Activated B cell treated with CpG ODN at 0.5 μM for 24 hours (primary cell): ENCODE measurements at regions of chr9 and their contacts with region 1.

Region 1: DNA sequence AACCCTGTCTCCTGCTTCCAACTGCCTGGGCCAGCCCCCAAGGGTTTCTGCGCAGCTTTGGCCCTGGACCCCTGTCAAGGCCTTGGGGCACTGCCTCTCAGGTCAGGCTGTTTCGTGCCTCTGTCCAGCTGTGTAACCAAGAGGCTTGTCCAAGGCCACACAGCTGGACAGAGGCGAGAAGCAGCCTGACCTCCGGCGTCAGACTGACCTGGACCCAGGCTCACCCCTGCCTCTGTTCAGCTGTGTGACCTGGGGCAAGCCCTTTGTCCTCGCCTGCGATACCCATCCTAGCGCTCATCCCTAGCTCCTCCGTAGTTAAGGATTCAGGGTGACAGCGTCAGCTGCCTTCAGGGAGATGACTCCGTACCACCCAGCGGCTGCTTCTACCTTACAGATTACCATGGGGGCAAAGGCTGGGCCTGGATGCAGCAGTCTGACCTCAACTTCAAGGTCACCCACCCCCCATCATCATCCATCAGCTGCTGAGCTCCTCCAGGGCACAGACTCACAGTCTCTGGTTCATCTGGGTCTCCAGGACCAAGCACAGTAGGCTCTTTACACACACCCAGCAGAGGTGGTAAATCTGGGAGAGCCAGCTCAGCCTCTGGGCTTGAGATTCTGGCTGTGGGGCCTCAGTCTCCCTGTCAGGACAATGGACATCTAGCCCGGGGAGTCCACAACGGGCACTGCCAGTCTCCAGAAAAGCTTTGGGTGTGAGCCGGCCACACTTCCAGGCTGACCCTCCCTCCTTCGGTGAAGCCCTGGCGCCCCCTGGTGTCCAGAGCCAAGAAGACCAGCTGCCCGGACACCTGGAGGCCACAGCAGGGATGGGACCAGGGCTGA is 7.9 kb downstream of the AK1 start:
- DNase-seq: peak; percentile 81
- ATAC-seq: peak; percentile 79
- H3K4me3 Mint-ChIP-seq: no peak overlapping the region
- H3K27ac Mint-ChIP-seq: no peak overlapping the region
- H3K4me1 Mint-ChIP-seq: peaks cover 22% of the 10 kb centered on the region
- H3K27me3 Mint-ChIP-seq: no peaks in the 10 kb centered on the region
- CTCF ChIP-seq: no peak

Region 2: DNA sequence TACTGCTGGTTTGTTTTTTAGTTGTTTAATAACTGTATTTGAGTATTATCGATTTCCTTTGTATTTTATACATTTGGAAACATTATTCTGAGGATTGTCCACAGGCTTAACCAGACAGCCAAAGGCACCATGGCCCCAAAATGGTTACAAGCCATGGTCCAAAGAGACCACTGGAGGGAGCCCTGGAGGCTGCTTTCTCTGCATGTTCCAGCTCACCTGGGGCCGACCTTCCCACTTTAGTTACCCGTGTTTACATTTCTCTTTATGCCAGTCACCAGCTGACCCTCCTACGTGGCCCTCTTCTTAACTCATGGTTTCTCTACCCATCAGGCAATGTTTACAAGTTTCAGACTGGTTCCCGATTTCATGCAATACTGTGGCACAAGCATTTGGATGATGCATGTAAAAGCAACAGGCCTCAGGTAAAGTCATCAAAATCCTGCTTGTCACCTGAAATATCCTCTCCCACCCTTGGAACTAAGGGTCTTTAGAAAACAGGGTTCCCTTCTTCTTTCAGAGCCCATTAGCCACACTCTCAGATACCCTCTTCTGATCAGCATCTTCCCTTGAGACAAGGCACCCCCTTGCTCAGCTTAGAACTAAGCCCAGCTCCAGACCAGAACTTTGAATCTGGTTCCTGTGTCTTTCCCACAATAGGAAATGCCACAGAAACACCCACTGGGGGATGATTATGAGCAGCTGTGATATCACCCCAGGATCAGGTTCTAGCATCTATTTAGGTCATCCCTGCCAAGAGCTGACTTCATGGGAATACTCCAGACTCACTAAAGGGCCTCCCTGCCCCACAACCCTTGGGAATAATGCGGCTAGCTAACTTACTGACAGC is 654.9 kb before region 1 on chr9:
- CTCF ChIA-PET with region 1: interaction called, 5 read pairs
- POLR2A ChIA-PET with region 1: no interaction called
- intact Hi-C with region 1: loop called (anchors 2 kb)
- DNase-seq: no peak
- ATAC-seq: peak; percentile 86
- H3K4me3 Mint-ChIP-seq: no peak overlapping the region
- H3K27ac Mint-ChIP-seq: no peak overlapping the region
- H3K4me1 Mint-ChIP-seq: peaks cover 4% of the 10 kb centered on the region
- H3K27me3 Mint-ChIP-seq: no peaks in the 10 kb centered on the region
- CTCF ChIP-seq: peak; percentile 17

Region 3: GRCh38 chr9:127586537-127586936 is 283.0 kb before region 1 on chr9:
- CTCF ChIA-PET with region 1: interaction called, 25 read pairs
- POLR2A ChIA-PET with region 1: no interaction called
- intact Hi-C with region 1: loop called (anchors 1 kb)
- DNase-seq: no peak
- ATAC-seq: peak; percentile 64
- H3K4me3 Mint-ChIP-seq: no peak overlapping the region
- H3K27ac Mint-ChIP-seq: no peak overlapping the region
- H3K4me1 Mint-ChIP-seq: no peaks in the 10 kb centered on the region
- H3K27me3 Mint-ChIP-seq: peaks cover 24% of the 10 kb centered on the region
- CTCF ChIP-seq: no peak

Region 4: DNA sequence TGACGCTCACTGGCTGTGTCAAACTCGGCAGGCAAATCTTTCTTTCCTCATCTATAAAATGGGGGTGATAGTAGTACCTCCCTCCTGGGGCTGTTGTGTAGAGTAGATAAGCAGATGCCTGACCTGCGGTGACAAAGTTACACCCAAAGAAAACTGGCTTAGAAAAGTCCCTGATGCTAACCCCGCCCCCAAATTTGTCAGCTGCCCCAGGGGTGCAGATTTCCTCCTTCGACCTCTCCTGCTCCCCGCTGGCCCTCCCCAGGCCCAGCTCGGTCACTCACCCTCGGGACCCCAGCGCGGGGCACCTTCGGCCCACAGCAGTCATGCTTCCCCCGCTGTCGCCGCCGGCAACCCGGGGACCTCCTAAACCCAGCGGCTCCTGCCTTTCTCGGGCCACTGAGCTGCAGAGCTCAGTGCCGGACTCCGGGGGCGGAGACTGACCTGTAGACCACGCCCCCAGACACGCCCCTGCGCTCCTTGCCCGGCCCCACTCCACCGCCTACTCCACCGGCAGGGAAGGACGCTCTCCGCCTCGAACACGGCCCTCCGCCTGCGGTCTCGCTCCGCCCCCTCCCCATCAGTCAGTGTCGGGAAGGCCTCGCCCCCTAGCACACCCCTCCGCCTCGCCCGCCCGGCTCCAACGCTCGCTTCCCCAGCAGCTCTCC is 98.5 kb before region 1 on chr9:
- CTCF ChIA-PET with region 1: interaction called, 25 read pairs
- POLR2A ChIA-PET with region 1: interaction called, 14 read pairs
- intact Hi-C with region 1: no loop called
- DNase-seq: peak; percentile 98
- ATAC-seq: peak; percentile 90
- H3K4me3 Mint-ChIP-seq: peak overlapping the region; percentile 93
- H3K27ac Mint-ChIP-seq: peak overlapping the region; percentile 93
- H3K4me1 Mint-ChIP-seq: peaks cover 72% of the 10 kb centered on the region
- H3K27me3 Mint-ChIP-seq: no peaks in the 10 kb centered on the region
- CTCF ChIP-seq: no peak

Region 5: GRCh38 chr9:127802576-127803443 is 66.7 kb before region 1 on chr9 and contains the start of gene FPGS:
- CTCF ChIA-PET with region 1: interaction called, 8 read pairs
- POLR2A ChIA-PET with region 1: interaction called, 5 read pairs
- intact Hi-C with region 1: loop called (anchors 1 kb)
- DNase-seq: peak; percentile 81
- ATAC-seq: peak; percentile 84
- H3K4me3 Mint-ChIP-seq: peak within 1 kb of the TSS; percentile 93
- H3K27ac Mint-ChIP-seq: peak within 1 kb of the TSS; percentile 87
- H3K4me1 Mint-ChIP-seq: peaks cover 32% of the 10 kb centered on the region
- H3K27me3 Mint-ChIP-seq: no peaks in the 10 kb centered on the region
- CTCF ChIP-seq: no peak
- total RNA-seq, gene FPGS: 105 and 135 TPM in 2 replicates

Region 6: DNA sequence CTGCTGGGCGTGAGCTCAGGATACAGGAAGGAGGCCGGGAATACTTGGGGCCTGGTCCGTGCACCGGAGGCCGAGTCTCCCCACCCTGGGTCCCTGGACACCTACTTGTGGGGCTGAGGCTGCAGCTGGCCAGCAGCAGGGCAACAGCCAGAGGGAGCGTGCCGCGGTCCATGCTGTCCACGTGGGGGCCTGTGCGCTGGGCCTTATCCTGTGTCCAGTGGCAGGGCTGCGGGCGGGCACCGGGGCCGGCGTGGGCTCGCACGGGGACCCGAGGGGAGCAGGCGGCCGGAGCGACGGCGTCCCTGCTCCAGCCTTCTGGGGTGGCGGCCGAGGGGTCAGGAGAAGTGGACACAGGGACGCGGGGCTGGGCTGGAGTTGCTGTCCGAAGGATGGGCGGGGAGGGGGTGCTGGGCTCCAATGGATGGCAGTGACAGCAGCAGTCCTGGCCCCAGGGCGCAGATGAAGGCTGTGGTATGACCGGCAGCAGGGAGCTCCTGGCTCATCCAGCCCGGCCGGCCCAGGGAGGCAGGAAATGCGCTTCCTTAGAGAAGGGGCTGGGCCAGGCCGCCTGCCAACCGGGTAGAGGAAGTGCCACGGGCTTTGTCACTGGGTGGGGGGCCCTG is 15.2 kb before region 1 on chr9 and contains the start of gene ENG:
- CTCF ChIA-PET with region 1: interaction called, 11 read pairs
- POLR2A ChIA-PET with region 1: interaction called, 6 read pairs
- intact Hi-C with region 1: no loop called
- DNase-seq: no peak
- ATAC-seq: peak; percentile 71
- H3K4me3 Mint-ChIP-seq: peak within 1 kb of the TSS; percentile 82
- H3K27ac Mint-ChIP-seq: peak within 1 kb of the TSS; percentile 41
- H3K4me1 Mint-ChIP-seq: peaks cover 41% of the 10 kb centered on the region
- H3K27me3 Mint-ChIP-seq: no peaks in the 10 kb centered on the region
- CTCF ChIP-seq: no peak
- total RNA-seq, gene ENG: 4.8 and 6.1 TPM in 2 replicates

Region 7: GRCh38 chr9:127955294-127956035 is 85.9 kb after region 1 on chr9:
- CTCF ChIA-PET with region 1: no interaction called
- POLR2A ChIA-PET with region 1: no interaction called
- intact Hi-C with region 1: no loop called
- DNase-seq: no peak
- ATAC-seq: peak; percentile 99
- H3K4me3 Mint-ChIP-seq: no peak overlapping the region
- H3K27ac Mint-ChIP-seq: peak overlapping the region; percentile 79
- H3K4me1 Mint-ChIP-seq: peaks cover 61% of the 10 kb centered on the region
- H3K27me3 Mint-ChIP-seq: no peaks in the 10 kb centered on the region
- CTCF ChIP-seq: no peak